Ovary (tissue), 10 donors: ENCODE measurements at regions of chr1 and their contacts with region 1.

Region 1: GRCh38 chr1:22275721-22276395 is 133.0 kb upstream of the WNT4 start:
- DNase-seq: peak; percentile 55 to 77 (median 63)
- H3K4me3 ChIP-seq: no peak overlapping the region
- H3K27ac ChIP-seq: no peak overlapping the region
- H3K4me1 ChIP-seq: peaks cover 2% of the 10 kb centered on the region
- H3K27me3 ChIP-seq: no peaks in the 10 kb centered on the region
- CTCF ChIP-seq: peak; percentile 51 to 71 (median 55)
- EP300 ChIP-seq: no peak
- POLR2A ChIP-seq: no peak

Region 2: GRCh38 chr1:22131875-22132486 is 143.9 kb before region 1 on chr1:
- intact Hi-C with region 1: loop called in 1 of 4 experiments (anchors 10 kb)
- DNase-seq: peak in 3 of 5 donors; percentile 55 to 77 (median 67)
- H3K4me3 ChIP-seq: no peak overlapping the region
- H3K27ac ChIP-seq: no peak overlapping the region
- H3K4me1 ChIP-seq: peaks cover 10% of the 10 kb centered on the region
- H3K27me3 ChIP-seq: no peaks in the 10 kb centered on the region
- CTCF ChIP-seq: peak; percentile 13 to 60 (median 38)
- EP300 ChIP-seq: no peak
- POLR2A ChIP-seq: no peak

Region 3: GRCh38 chr1:22153660-22154437 is 122.0 kb before region 1 on chr1:
- intact Hi-C with region 1: loop called in 1 of 4 experiments (anchors 10 kb)
- DNase-seq: no peak
- H3K4me3 ChIP-seq: no peak overlapping the region
- H3K27ac ChIP-seq: no peak overlapping the region
- H3K4me1 ChIP-seq: no peaks in the 10 kb centered on the region
- H3K27me3 ChIP-seq: no peaks in the 10 kb centered on the region
- CTCF ChIP-seq: no peak
- EP300 ChIP-seq: no peak
- POLR2A ChIP-seq: no peak

Region 4: GRCh38 chr1:22416555-22417454 is 140.9 kb after region 1 on chr1:
- intact Hi-C with region 1: loop called in 2 of 4 experiments (anchors 10 kb)
- DNase-seq: peak; percentile 70 to 88 (median 80)
- H3K4me3 ChIP-seq: no peak overlapping the region
- H3K27ac ChIP-seq: no peak overlapping the region
- H3K4me1 ChIP-seq: no peaks in the 10 kb centered on the region
- H3K27me3 ChIP-seq: no peaks in the 10 kb centered on the region
- CTCF ChIP-seq: peak; percentile 73 to 94 (median 75)
- EP300 ChIP-seq: no peak
- POLR2A ChIP-seq: no peak